ENCODE measurements at regions of chr4 and their contacts with region 1.

Region 1: DNA sequence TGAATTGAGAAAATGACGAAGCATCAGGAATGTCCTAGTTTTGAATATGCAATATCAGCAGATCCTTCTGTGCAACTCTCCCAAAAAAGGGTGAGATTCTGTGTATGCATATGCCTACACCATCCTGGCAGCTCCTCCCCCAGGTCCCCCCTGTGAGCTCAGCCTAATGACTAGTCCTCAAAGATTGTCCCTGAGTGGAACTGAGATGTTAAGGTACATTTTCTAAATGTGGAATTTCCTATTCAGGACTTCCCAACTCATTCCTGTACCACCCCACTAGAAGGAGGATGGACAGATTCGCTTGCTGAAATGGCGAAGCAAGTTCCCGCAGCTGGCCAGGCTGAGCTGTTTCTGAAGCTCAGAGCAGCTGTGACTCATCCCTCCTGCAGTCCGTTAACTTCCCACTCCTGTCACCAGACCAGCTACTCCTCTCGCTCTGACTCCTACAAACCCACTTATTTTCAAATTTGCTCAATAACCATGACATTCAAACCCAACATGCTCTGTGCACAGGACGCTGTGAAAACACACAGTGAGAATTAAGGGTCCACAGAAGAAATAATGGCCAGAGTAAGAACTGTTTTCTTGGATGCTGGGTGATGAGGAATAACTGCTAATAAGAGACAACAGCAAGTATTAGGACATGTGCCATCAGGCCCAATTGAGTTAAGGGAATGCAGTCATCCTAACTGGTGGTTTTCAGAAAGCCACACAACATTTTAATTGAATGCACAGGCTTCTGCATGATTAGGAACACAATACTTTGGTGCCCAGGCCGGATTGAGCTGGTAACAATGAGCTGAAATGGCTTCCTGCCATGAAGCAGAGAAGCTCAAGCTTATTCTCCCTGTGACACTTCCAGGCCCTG is 40.0 kb upstream of the IRF2 start:
- DNase-seq: peak; percentile 64
- H3K27ac ChIP-seq: peak overlapping the region; percentile 69
- CTCF ChIP-seq: no peak

Region 2: DNA sequence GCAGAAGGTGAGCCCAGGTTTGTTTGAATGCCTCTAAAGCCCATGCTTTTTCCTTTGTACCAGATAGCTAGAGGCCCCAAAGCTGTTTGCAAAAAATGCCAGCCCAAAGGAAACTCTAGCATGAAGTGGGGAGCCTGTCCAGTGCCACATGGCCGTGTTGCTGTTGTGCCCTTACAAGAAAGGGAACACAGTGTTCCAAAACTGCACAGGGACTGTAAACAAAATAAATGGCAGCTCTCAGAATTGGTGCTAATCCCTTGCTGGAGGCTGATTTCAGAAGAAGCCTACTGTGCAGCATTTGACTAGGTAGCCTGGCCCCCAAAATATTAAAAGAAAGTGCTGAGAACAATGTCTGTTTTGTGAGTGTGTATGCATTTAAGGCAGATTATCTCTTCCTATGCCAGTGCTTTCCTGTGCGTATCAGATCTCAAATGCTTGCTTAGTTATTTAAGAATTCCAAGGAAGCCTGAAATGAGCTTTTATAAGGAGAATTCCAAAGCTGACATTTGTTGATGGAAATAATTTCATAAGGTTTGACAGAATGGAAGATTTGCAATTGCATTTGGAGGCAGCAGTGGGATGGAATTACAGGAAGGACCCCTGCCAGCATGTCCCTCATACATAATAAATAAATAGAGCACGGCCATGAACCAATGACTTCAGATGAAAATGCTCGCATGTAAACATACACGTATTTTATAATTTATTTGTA is 155.7 kb before region 1 on chr4:
- CTCF ChIA-PET with region 1: no interaction called
- POLR2A ChIA-PET with region 1: interaction called, 19 read pairs
- DNase-seq: no peak
- H3K27ac ChIP-seq: no peak overlapping the region
- CTCF ChIP-seq: no peak

Region 3: GRCh38 chr4:184544788-184545409 is 30.5 kb after region 1 on chr4:
- CTCF ChIA-PET with region 1: no interaction called
- POLR2A ChIA-PET with region 1: no interaction called
- DNase-seq: no peak
- H3K27ac ChIP-seq: no peak overlapping the region
- CTCF ChIP-seq: no peak